ENCODE measurements at regions of chr1 and their contacts with region 1.

Region 1: GRCh38 chr1:2194898-2195673 is 514 bp upstream of the FAAP20 start:
- DNase-seq: peak; percentile 86
- H3K4me3 ChIP-seq: peak overlapping the region; percentile 71 to 92 (median 73)
- H3K27ac ChIP-seq: peak overlapping the region; percentile 78
- H3K4me1 ChIP-seq: peaks cover 19% of the 10 kb centered on the region
- H3K27me3 ChIP-seq: no peaks in the 10 kb centered on the region
- CTCF ChIP-seq: peak; percentile 96 to 97
- POLR2A ChIP-seq: peak; percentile 62

Region 2: DNA sequence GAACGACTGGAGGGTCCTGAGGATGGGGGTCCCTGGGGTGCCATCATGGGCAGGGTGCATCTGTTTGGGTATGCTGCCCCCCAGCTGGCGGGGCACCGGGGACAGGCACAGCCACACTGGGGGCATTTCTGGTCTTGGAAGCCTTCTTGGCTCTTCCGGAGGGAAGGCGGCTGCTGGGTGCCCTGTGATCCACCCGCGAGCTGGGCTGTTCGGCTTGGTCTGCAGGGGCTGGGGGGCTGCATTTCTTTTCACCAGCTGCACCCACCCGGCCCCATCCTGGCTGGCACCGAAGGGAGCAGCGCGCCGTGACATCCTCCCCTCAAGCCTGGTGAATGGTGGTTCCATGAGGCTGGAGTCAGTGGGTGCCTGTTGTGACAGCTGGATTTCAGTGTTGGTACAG is 12.7 kb before region 1 on chr1:
- CTCF ChIA-PET with region 1: no interaction called
- POLR2A ChIA-PET with region 1: no interaction called
- dilution Hi-C with region 1: no loop called
- intact Hi-C with region 1: no loop called
- DNase-seq: no peak
- H3K4me3 ChIP-seq: no peak overlapping the region
- H3K27ac ChIP-seq: no peak overlapping the region
- H3K4me1 ChIP-seq: no peaks in the 10 kb centered on the region
- H3K27me3 ChIP-seq: no peaks in the 10 kb centered on the region
- CTCF ChIP-seq: no peak
- POLR2A ChIP-seq: no peak

Region 3: GRCh38 chr1:2212542-2213491 is 17.7 kb after region 1 on chr1:
- CTCF ChIA-PET with region 1: interaction called, 11 read pairs
- POLR2A ChIA-PET with region 1: no interaction called
- dilution Hi-C with region 1: no loop called
- intact Hi-C with region 1: loop called (anchors 1 kb)
- DNase-seq: peak; percentile 97
- H3K4me3 ChIP-seq: peak overlapping the region in 2 of 3 experiments; percentile 2 to 27
- H3K27ac ChIP-seq: peak overlapping the region; percentile 98
- H3K4me1 ChIP-seq: peaks cover 37% of the 10 kb centered on the region
- H3K27me3 ChIP-seq: no peaks in the 10 kb centered on the region
- CTCF ChIP-seq: peak; percentile 21 to 25
- POLR2A ChIP-seq: peak; percentile 71

Region 4: GRCh38 chr1:2279210-2279639 is 84.1 kb after region 1 on chr1:
- CTCF ChIA-PET with region 1: interaction called, 4 read pairs
- POLR2A ChIA-PET with region 1: no interaction called
- dilution Hi-C with region 1: no loop called
- intact Hi-C with region 1: loop called (anchors 2 kb)
- DNase-seq: peak; percentile 98
- H3K4me3 ChIP-seq: no peak overlapping the region
- H3K27ac ChIP-seq: peak overlapping the region; percentile 70
- H3K4me1 ChIP-seq: peaks cover 24% of the 10 kb centered on the region
- H3K27me3 ChIP-seq: no peaks in the 10 kb centered on the region
- CTCF ChIP-seq: no peak
- POLR2A ChIP-seq: no peak

Region 5: DNA sequence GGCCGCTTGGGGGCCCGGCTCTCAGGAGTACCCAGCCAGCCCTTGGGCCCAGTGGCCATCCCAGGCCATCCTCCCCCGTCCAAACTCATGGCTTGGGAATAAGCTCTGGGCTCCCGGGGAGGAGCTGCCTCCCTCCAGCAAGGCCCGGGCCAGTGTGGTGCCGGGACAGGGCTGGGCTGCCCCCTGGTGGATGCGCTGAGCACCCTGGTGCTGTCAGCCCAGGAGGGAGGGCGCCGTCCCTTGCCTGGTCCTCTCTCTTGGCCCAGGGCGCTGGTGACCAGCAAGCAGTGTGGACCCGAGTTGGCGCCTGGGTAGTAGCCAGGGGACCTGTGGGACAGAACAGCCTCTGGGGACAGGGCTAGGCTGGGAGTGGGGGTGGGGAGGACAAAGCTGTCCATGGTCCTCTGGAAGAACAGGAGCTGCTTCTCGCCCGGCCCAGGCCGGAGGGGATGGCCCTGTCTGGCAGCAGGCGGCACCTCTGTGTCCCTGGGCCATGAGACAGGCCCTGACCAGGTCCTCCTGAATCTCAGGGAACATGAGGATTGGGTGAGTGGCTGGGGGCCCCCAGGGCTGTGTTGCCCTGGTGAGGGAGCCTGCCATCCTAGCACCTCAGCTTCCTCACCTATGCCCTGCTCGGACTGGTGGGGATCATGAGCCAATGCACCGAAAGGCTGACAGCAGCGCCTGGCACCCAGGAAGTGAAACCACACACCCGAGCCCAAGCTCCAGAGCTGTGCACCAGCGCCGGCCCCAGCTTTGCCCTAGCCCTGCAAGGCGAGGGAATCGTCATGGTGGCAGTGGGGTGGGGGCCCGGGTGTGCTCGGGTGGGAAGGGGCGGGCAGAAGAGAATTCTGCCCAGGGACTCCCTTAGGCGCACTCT is 186.9 kb after region 1 on chr1:
- CTCF ChIA-PET with region 1: interaction called, 631 read pairs
- POLR2A ChIA-PET with region 1: interaction called, 15 read pairs
- dilution Hi-C with region 1: loop called (anchors 10 kb)
- intact Hi-C with region 1: loop called (anchors 1 kb)
- DNase-seq: peak; percentile 65
- H3K4me3 ChIP-seq: no peak overlapping the region
- H3K27ac ChIP-seq: no peak overlapping the region
- H3K4me1 ChIP-seq: no peaks in the 10 kb centered on the region
- H3K27me3 ChIP-seq: no peaks in the 10 kb centered on the region
- CTCF ChIP-seq: peak; percentile 95 to 97
- POLR2A ChIP-seq: no peak

Region 6: DNA sequence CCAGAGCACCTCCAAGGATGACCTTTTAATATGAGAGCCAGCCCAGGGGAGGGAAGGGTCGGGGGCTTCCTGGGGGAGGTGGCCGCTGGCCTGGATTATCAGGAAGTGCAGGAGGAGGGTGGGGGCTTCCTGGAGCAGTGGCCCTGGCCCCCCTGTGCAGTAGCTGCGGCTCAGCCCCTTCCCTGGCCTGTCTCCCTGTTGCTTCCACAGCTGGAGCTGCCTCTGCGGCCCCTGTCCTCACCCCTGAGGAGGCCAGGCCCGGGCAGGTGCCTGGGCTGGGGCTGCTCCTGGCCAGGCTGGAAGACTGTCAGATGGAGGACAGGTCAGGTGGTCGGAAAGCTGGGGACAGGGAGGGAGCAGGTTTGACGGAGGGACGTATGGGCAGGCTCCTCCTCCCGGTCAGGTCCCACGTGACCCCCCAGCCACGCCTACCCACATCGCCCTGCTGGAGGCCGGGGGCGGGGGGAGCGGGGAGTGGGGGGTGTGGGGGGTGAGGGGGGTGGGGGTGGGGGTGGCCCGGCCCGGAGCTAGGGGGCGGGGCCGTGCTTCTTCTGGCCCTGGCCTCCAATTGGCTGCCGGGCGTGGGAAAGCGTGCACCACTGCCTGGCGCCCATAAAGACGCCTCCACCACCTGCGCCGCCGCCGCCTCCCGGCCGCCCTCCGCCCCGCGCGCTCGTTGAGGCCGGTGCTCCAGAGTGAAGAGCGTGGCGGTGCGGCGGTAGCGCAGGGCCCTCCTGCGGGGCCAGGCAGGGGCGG is 350.9 kb after region 1 on chr1:
- CTCF ChIA-PET with region 1: interaction called, 8 read pairs
- POLR2A ChIA-PET with region 1: no interaction called
- dilution Hi-C with region 1: no loop called
- intact Hi-C with region 1: loop called (anchors 1 kb)
- DNase-seq: peak; percentile 84
- H3K4me3 ChIP-seq: peak overlapping the region; percentile 51 to 74 (median 67)
- H3K27ac ChIP-seq: peak overlapping the region; percentile 80
- H3K4me1 ChIP-seq: peaks cover 27% of the 10 kb centered on the region
- H3K27me3 ChIP-seq: peaks cover 0 to 1% of the 10 kb centered on the region in 2 experiments
- CTCF ChIP-seq: no peak
- POLR2A ChIP-seq: peak; percentile 78